Gastrocnemius medialis (tissue), 4 donors: ENCODE measurements at regions of chr2 and their contacts with region 1.

Region 1: DNA sequence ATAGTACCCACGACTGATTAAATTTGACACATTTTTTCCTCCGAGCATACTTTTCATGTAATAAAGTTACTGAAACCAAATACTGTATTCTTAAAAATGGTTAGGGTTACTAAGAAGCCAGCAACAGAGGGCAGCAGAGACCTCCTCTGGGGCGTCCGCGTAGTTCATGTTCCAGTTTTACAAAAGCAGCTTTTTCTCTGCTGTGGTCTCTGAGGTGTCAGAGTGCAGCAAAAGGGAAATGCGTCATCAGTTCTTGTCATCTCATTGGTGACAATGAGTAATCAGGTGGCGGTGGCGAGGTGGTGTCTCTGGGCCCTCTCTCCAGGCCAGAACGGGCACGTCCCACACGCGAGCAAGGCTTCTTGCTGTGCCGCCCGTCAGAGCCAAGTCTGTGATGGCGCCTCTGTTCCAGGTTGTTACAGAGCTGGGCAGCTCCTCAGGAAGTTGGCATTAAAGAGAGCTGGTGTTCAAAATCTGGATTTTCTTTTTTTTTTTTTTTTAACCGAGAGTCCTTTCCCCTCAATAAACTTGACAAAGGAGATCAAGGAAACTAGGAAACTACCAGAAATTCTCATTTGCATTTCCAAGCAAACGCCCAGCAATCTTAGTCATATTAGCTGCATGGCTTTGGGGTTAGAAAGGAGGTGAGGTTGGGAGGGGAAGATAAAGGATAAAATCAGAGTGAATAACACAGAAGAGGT is 98.6 kb upstream of the BZW1 start:
- DNase-seq: peak; percentile 83 to 89
- ATAC-seq: peak; percentile 99 to 100
- H3K4me3 ChIP-seq: peak overlapping the region; percentile 33 to 51 (median 42)
- H3K27ac ChIP-seq: peak overlapping the region; percentile 70 to 82 (median 74)
- H3K4me1 ChIP-seq: peaks cover 0 to 3% of the 10 kb centered on the region in 2 donors
- H3K27me3 ChIP-seq: no peaks in the 10 kb centered on the region
- CTCF ChIP-seq: peak; percentile 73 to 89 (median 86)
- POLR2A ChIP-seq: peak; percentile 66 to 80

Region 2: GRCh38 chr2:199955339-199956261 is 757.6 kb before region 1 on chr2 and contains the starts of genes MAIP1 and TYW5:
- in situ Hi-C with region 1: loop called in 1 of 4 experiments (anchors 25 kb)
- intact Hi-C with region 1: no loop called
- DNase-seq: peak; percentile 68 to 72
- ATAC-seq: peak; percentile 98
- H3K4me3 ChIP-seq: peak within 1 kb of the TSS; percentile 83 to 94 (median 90)
- H3K27ac ChIP-seq: peak within 1 kb of the TSS; percentile 86 to 94 (median 90)
- H3K4me1 ChIP-seq: peaks cover 33% of the 10 kb centered on the region in 2 donors
- H3K27me3 ChIP-seq: no peaks in the 10 kb centered on the region
- CTCF ChIP-seq: peak in 3 of 5 experiments; percentile 34 to 43 (median 34)
- POLR2A ChIP-seq: peak; percentile 24 to 56
- total RNA-seq, gene MAIP1: 21.9 to 40.2 (median 26.6) TPM
- total RNA-seq, gene TYW5: 1.7 to 4.5 (median 3.8) TPM

Region 3: GRCh38 chr2:200765139-200765951 is 52.2 kb after region 1 on chr2:
- in situ Hi-C with region 1: no loop called
- intact Hi-C with region 1: loop called (anchors 2 kb)
- DNase-seq: peak in 1 of 2 donors; percentile 50
- ATAC-seq: peak in 1 of 2 donors; percentile 49
- H3K4me3 ChIP-seq: no peak overlapping the region
- H3K27ac ChIP-seq: peak overlapping the region; percentile 75 to 86 (median 82)
- H3K4me1 ChIP-seq: peaks cover 19 to 23% of the 10 kb centered on the region in 2 donors
- H3K27me3 ChIP-seq: no peaks in the 10 kb centered on the region
- CTCF ChIP-seq: no peak
- POLR2A ChIP-seq: no peak

Region 4: GRCh38 chr2:200795044-200795443 is 81.9 kb after region 1 on chr2:
- in situ Hi-C with region 1: loop called in 1 of 4 experiments (anchors 25 kb)
- intact Hi-C with region 1: loop called (anchors 2 kb)
- DNase-seq: peak; percentile 20 to 64
- ATAC-seq: peak; percentile 66 to 82
- H3K4me3 ChIP-seq: no peak overlapping the region
- H3K27ac ChIP-seq: peak overlapping the region; percentile 17 to 71 (median 48)
- H3K4me1 ChIP-seq: peaks cover 0 to 28% of the 10 kb centered on the region in 2 donors
- H3K27me3 ChIP-seq: no peaks in the 10 kb centered on the region
- CTCF ChIP-seq: peak in 3 of 5 experiments; percentile 22 to 30 (median 28)
- POLR2A ChIP-seq: no peak

Region 5: GRCh38 chr2:200864176-200864976 is 151.2 kb after region 1 on chr2 and contains the start of gene CLK1:
- in situ Hi-C with region 1: no loop called
- intact Hi-C with region 1: loop called (anchors 1 kb)
- DNase-seq: peak; percentile 94 to 96
- ATAC-seq: peak; percentile 81 to 83
- H3K4me3 ChIP-seq: peak within 1 kb of the TSS; percentile 97 to 99 (median 98)
- H3K27ac ChIP-seq: peak within 1 kb of the TSS; percentile 100
- H3K4me1 ChIP-seq: peaks cover 28 to 34% of the 10 kb centered on the region in 2 donors
- H3K27me3 ChIP-seq: no peaks in the 10 kb centered on the region
- CTCF ChIP-seq: peak in 1 of 5 experiments; percentile 18
- POLR2A ChIP-seq: peak; percentile 99
- total RNA-seq, gene CLK1: 61.6 to 104 (median 85.3) TPM

Region 6: DNA sequence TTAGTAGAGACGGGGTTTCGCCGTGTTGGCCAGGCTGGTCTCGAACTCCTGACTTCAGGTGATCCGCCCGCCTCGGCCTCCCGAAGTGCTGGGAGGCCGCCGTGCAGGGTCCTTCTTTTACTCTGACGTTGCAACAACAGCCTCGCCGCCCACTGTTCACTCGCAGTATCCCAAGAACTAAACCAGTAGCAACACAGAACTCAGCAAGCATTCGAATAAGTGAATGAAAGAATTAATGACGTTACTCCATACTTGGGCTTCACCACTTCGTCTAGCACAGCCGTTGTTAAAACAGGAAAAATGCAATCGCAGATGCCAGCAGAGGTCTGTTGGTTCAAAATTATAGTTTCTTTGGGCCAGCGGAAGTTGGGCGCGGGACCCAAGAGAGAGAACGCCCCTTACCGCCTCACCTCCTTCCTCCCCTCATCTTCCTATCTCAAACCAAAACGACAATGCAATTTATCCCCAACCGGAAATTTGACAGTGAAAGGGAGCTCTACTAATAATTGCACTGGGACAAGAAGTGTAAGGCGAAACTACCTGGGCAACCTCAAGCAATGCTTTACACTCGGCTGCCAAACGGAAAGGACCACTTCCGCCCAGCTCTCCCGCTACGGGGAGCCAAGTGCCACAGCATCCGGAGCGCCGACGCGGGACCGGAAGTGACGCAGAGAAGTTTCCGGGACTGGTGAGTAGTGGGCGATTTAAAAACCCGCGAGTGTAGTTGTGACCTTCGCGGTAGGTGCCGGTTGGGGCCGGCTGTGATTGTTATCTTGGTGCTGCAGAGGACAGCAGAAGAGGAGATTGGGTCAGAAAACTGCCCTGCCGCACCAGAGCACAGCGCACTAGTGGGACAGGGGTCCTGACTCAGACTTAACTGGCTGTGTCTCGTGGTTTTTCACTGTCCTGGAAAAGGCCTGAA is 175.8 kb after region 1 on chr2 and contains the starts of genes NIF3L1 and PPIL3:
- in situ Hi-C with region 1: no loop called
- intact Hi-C with region 1: loop called (anchors 1 kb)
- DNase-seq: peak; percentile 90 to 93
- ATAC-seq: peak; percentile 95 to 97
- H3K4me3 ChIP-seq: peak within 1 kb of the TSS; percentile 60 to 91 (median 74)
- H3K27ac ChIP-seq: peak within 1 kb of the TSS; percentile 90 to 94 (median 94)
- H3K4me1 ChIP-seq: peaks cover 13 to 22% of the 10 kb centered on the region in 2 donors
- H3K27me3 ChIP-seq: no peaks in the 10 kb centered on the region
- CTCF ChIP-seq: no peak
- POLR2A ChIP-seq: peak; percentile 50 to 57
- total RNA-seq, gene NIF3L1: 17.0 to 28.7 (median 22.4) TPM
- total RNA-seq, gene PPIL3: 8.4 to 29.2 (median 14.3) TPM

Region 7: GRCh38 chr2:201038855-201039254 is 325.7 kb after region 1 on chr2:
- in situ Hi-C with region 1: no loop called
- intact Hi-C with region 1: no loop called
- DNase-seq: no peak
- ATAC-seq: no peak
- H3K4me3 ChIP-seq: no peak overlapping the region
- H3K27ac ChIP-seq: no peak overlapping the region
- H3K4me1 ChIP-seq: peaks cover 8 to 16% of the 10 kb centered on the region in 2 donors
- H3K27me3 ChIP-seq: no peaks in the 10 kb centered on the region
- CTCF ChIP-seq: no peak
- POLR2A ChIP-seq: no peak